Activated naive CD4-positive, alpha-beta T cell treated with anti-CD3 and anti-CD28 coated beads for 36 hours (primary cell): ENCODE measurements at regions of chr6 and their contacts with region 1.

Region 1: GRCh38 chr6:90892271-90892670 is 305.4 kb upstream of the MAP3K7 start:
- DNase-seq: no peak
- H3K4me3 Mint-ChIP-seq: no peak overlapping the region
- H3K27ac Mint-ChIP-seq: no peak overlapping the region
- H3K4me1 Mint-ChIP-seq: no peaks in the 10 kb centered on the region
- H3K27me3 Mint-ChIP-seq: peaks cover 1% of the 10 kb centered on the region

Region 2: DNA sequence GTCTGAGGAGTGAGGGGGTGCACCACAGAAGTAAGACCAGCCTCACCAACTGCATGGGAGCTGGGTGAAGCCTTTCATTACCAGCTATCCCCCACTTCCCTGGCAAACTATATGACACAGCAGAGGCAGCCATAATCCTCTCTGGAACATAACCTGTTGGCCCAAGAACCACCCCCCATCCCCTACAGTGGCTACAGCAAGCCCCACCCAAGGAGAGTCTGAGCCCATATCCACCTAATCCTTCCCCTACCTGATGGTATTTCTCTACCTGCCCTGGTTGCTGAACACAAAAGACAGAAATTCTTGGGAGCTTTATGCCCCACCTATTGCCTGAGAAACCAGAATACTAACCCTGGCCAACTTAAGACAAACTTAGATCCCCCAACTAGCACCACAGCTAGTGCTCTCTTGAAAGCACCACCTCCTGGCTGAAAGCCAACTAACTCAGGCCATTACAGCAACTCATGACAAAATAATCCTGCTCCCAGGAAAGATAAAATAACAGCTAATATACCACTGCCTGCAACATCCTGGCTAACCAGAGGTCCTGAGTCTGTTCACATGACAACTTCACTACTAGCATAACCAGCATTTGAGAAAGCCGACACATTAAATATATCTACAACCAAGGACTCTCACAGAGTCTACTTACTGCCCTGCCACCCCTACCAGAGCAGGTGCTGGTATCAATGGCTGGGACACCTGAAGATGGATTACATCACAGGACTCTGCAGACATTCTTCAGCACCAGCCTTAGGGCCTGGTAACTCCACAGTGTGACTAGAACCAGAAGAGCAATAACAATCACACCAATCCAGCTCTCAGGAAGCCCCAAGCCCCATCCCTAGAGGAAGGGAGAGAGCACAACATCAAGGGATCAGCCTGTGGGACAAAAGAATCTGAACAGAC is 1940.0 kb before region 1 on chr6:
- CTCF ChIA-PET with region 1: no interaction called
- intact Hi-C with region 1: no loop called
- DNase-seq: no peak
- H3K4me3 Mint-ChIP-seq: no peak overlapping the region
- H3K27ac Mint-ChIP-seq: no peak overlapping the region
- H3K4me1 Mint-ChIP-seq: peaks cover 13% of the 10 kb centered on the region
- H3K27me3 Mint-ChIP-seq: no peaks in the 10 kb centered on the region

Region 3: GRCh38 chr6:90446164-90446563 is 446.1 kb before region 1 on chr6:
- CTCF ChIA-PET with region 1: no interaction called
- intact Hi-C with region 1: no loop called
- DNase-seq: no peak
- H3K4me3 Mint-ChIP-seq: no peak overlapping the region
- H3K27ac Mint-ChIP-seq: peak overlapping the region; percentile 95
- H3K4me1 Mint-ChIP-seq: peaks cover 56% of the 10 kb centered on the region
- H3K27me3 Mint-ChIP-seq: no peaks in the 10 kb centered on the region

Region 4: DNA sequence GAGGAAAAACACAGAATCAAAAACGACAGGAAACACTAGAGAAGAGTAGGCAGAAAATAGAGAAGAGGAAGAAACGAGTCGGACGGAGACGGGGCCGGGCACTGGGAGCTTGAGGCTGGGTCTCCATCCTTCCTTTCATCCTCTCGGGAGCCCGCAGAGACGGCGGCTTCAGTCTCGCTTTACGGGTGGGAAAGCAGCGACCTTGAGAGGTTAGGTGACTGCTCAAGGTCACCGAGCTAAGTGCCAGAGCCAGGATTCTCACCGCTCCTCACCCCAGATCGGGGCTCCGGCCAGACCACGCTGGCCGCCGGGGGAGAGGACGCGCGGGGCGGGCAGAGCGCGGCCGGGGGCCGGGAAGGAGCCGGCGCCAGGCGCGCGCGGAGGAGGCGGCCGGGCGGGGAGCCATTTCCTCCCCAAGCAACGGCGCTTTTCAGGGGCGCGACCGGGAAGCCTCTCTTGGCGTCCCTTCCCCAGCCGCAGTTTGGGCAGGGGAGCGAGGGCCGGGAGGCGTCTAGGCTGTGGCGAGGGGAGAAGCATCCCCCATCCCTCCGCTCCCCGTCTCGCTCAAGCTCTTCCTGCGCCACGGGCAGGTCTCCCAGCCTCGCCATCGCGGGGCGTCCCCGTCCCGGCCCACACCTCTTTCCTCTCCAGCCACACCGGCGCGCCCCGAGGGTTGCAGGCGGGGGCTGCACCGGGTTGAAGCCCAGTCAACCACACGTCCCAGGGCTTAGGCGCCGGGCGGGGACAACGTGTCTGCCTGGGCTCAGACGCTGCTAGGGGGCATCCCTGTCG is 281.3 kb before region 1 on chr6:
- CTCF ChIA-PET with region 1: no interaction called
- intact Hi-C with region 1: loop called (anchors 1 kb)
- DNase-seq: peak; percentile 54
- H3K4me3 Mint-ChIP-seq: peak overlapping the region; percentile 80
- H3K27ac Mint-ChIP-seq: no peak overlapping the region
- H3K4me1 Mint-ChIP-seq: peaks cover 11% of the 10 kb centered on the region
- H3K27me3 Mint-ChIP-seq: peaks cover 39% of the 10 kb centered on the region